ENCODE measurements at regions of chr19 and their contacts with region 1.

Region 1: DNA sequence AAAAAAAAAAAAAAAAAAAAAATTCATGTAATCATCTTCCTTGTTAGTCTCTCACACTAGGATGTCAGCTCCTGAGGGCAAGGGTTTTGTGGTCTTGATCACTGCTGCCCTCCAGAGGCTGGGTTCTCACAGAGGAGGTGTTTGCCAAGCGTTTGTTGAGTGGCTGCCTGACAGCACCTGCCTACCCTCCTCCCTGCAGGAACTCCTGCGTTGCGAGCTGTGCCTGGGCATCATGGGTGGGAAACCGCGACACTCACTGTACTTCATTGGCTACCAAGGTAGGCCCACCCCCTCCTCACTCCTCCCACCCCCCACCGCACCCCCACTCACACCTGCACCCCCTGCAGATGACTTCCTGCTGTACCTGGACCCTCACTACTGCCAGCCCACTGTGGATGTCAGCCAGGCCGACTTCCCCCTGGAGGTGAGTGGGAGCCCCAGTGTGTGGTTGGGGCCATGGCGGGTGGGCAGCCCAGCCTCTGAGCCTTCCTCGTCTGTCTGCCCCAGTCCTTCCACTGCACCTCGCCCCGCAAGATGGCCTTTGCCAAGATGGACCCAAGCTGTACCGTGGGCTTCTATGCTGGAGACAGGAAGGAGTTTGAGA is 8.1 kb downstream of the ATG4D start:
- DNase-seq: peak; percentile 71
- ATAC-seq: no peak
- H3K4me3 Mint-ChIP-seq: no peak overlapping the region
- H3K27ac Mint-ChIP-seq: peak overlapping the region; percentile 95
- H3K4me1 Mint-ChIP-seq: peaks cover 56% of the 10 kb centered on the region
- H3K27me3 Mint-ChIP-seq: no peaks in the 10 kb centered on the region

Region 2: DNA sequence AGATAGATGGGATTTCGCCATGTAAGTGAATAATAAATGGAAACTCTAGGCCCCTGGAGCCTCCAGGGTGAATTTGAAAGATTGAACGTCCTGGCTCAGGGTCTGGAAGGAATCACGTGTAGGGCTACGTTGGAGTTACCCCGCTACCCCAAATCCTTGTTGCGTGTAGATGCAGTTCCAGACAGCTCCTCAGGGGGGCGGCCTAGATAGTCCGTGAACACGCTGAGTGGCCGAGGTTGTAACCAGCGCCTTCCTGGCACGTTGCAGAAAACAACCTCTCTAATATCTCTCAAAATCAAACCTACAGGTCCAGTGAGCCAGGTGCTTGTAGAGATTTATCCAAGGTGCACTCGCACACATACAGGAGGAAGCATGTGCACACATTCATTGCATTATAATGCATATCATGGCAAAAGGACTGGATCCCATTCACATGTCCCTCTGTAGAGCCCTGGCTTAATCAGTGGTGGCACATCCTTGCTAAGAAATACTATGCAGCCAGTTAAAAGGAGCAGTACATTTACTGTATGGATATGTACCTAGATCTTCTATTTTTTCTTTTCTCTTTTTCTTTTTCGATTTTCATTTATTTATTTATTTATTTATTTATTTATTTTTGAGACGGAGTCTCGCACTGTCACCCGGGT is 46.1 kb before region 1 on chr19:
- CTCF ChIA-PET with region 1: interaction called, 13 read pairs
- DNase-seq: peak; percentile 91
- ATAC-seq: peak; percentile 10
- H3K4me3 Mint-ChIP-seq: no peak overlapping the region
- H3K27ac Mint-ChIP-seq: peak overlapping the region; percentile 66
- H3K4me1 Mint-ChIP-seq: peaks cover 37% of the 10 kb centered on the region
- H3K27me3 Mint-ChIP-seq: no peaks in the 10 kb centered on the region

Region 3: GRCh38 chr19:10565567-10566407 is 14.0 kb after region 1 on chr19 and contains the start of gene KRI1:
- CTCF ChIA-PET with region 1: interaction called, 116 read pairs
- DNase-seq: peak; percentile 99
- ATAC-seq: peak; percentile 48
- H3K4me3 Mint-ChIP-seq: peak within 1 kb of the TSS; percentile 96
- H3K27ac Mint-ChIP-seq: peak within 1 kb of the TSS; percentile 93
- H3K4me1 Mint-ChIP-seq: peaks cover 40% of the 10 kb centered on the region
- H3K27me3 Mint-ChIP-seq: no peaks in the 10 kb centered on the region
- total RNA-seq, gene KRI1: 68.1 to 72.2 TPM

Region 4: GRCh38 chr19:10574462-10574861 is 22.7 kb after region 1 on chr19:
- CTCF ChIA-PET with region 1: interaction called, 116 read pairs
- DNase-seq: no peak
- ATAC-seq: no peak
- H3K4me3 Mint-ChIP-seq: no peak overlapping the region
- H3K27ac Mint-ChIP-seq: no peak overlapping the region
- H3K4me1 Mint-ChIP-seq: peaks cover 27% of the 10 kb centered on the region
- H3K27me3 Mint-ChIP-seq: no peaks in the 10 kb centered on the region